HepG2 (cell line): ENCODE measurements at regions of chr1 and their contacts with region 1.

Region 1: DNA sequence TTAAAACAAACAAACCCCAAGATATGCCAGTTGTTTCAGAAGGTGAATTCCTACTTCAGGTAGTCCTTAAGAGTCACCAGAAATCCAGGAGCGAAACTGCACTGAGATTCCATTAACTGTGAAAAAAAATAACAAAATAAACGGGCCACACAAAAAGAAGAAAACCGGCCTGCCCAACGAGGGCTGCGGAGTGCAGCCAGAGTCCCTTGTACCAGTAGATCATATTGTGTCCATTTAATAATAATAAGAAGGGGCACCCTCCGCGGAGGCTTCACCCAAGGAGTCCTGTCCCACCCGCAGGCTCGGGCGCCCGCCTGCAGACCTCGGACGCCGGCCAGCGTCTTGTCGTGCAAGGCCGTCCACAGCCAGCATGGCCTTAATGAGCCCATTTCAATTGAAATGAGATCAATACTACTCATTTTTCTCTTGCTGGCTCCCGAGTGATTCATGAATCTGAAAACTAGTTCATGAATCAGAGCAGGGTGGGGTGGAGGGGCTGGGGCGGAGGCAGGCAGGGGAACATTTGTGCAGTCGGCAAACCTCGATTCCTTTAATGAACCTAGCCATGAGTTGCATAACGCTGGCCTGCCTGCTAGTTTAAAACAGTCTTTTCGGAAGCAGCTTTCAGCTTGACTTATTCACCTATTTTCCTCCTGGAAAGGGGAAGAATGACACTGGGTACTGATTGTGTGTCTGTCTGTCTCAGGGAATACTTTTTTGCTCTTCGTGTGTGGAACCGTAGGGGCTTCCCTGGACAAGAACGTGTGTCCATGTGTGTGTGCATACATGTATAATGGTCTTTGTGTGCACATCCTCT is 113.1 kb upstream of the IRF2BP2 start:
- DNase-seq: peak; percentile 82
- ATAC-seq: no peak
- H3K4me3 ChIP-seq: peak overlapping the region in 1 of 3 experiments; percentile 61; a peak in 2 of 6 replicates
- H3K27ac ChIP-seq: peak overlapping the region; percentile 99
- H3K4me1 ChIP-seq: peaks cover 97% of the 10 kb centered on the region
- H3K27me3 ChIP-seq: no peaks in the 10 kb centered on the region
- CTCF ChIP-seq: no peak
- EP300 ChIP-seq: peak in 1 of 2 experiments; percentile 4; a peak in 1 of 4 replicates
- POLR2A ChIP-seq: peak in 1 of 2 experiments; percentile 48; a peak in 1 of 4 replicates
- RAD21 ChIP-seq: no peak

Region 2: DNA sequence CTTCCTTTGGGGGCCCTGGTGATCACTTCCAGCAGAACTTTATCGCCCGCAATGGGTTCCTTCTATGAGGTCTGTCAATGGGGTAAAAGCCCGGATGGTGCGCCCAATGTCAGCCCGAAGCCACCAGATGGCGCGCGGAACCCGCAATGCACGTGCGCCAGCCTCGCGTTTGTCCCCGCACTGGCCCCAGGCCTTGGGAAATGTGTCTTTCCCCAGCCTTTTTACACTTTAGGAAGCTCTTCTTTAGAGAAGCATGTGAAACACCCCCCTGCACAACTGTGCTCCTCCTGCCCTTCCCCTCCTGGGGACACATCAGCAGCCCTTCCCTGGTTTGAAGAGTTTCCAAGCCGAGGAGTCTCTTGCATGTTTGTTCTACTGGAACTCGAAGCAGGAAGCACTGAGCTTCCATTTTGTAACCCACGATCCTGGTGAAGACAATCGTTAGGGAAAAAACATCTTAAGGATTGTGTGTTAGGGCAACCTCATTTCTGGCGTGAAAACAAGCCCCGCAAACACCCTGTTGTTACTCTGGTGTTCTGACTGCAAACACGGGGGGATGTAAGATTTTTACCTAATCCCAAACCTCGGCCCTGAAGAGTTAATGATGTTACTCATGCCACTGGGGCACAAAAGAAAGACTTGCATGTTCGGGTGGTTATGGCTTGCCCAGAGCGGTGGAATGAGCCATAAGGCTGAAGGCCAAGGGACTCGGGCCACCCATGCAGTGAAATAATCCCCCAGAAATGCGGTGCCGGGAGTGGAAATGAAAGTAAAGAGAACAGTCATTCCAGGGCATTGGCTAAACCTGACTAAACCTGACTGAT is 223.8 kb before region 1 on chr1:
- CTCF ChIA-PET with region 1: no interaction called
- POLR2A ChIA-PET with region 1: interaction called, 8 read pairs
- in situ Hi-C with region 1: loop called (anchors 10 kb)
- intact Hi-C with region 1: loop called (anchors 10 kb)
- DNase-seq: peak; percentile 65
- ATAC-seq: peak; percentile 99
- H3K4me3 ChIP-seq: 0 out of 6 replicates have a peak overlapping the region, but pooled peaks of 1 of the 3 experiments have one; percentile 8
- H3K27ac ChIP-seq: peak overlapping the region; percentile 50
- H3K4me1 ChIP-seq: peaks cover 61% of the 10 kb centered on the region
- H3K27me3 ChIP-seq: no peaks in the 10 kb centered on the region
- CTCF ChIP-seq: peak; percentile 97
- EP300 ChIP-seq: no peak
- POLR2A ChIP-seq: no peak
- RAD21 ChIP-seq: peak; percentile 99

Region 3: GRCh38 chr1:234631721-234632125 is 91.4 kb before region 1 on chr1:
- CTCF ChIA-PET with region 1: no interaction called
- POLR2A ChIA-PET with region 1: interaction called, 16 read pairs
- in situ Hi-C with region 1: no loop called
- intact Hi-C with region 1: no loop called
- DNase-seq: peak; percentile 90
- ATAC-seq: peak; percentile 66
- H3K4me3 ChIP-seq: no peak overlapping the region
- H3K27ac ChIP-seq: peak overlapping the region; percentile 60
- H3K4me1 ChIP-seq: peaks cover 80% of the 10 kb centered on the region
- H3K27me3 ChIP-seq: no peaks in the 10 kb centered on the region
- CTCF ChIP-seq: no peak
- EP300 ChIP-seq: peak in 1 of 2 experiments; percentile 82; a peak in 2 of 4 replicates
- POLR2A ChIP-seq: no peak
- RAD21 ChIP-seq: no peak

Region 4: GRCh38 chr1:234737967-234738314 is 14.8 kb after region 1 on chr1:
- CTCF ChIA-PET with region 1: no interaction called
- POLR2A ChIA-PET with region 1: interaction called, 35 read pairs
- in situ Hi-C with region 1: no loop called
- intact Hi-C with region 1: no loop called
- DNase-seq: no peak
- ATAC-seq: no peak
- H3K4me3 ChIP-seq: no peak overlapping the region
- H3K27ac ChIP-seq: no peak overlapping the region
- H3K4me1 ChIP-seq: peaks cover 37% of the 10 kb centered on the region
- H3K27me3 ChIP-seq: no peaks in the 10 kb centered on the region
- CTCF ChIP-seq: no peak
- EP300 ChIP-seq: no peak
- POLR2A ChIP-seq: no peak
- RAD21 ChIP-seq: no peak

Region 5: DNA sequence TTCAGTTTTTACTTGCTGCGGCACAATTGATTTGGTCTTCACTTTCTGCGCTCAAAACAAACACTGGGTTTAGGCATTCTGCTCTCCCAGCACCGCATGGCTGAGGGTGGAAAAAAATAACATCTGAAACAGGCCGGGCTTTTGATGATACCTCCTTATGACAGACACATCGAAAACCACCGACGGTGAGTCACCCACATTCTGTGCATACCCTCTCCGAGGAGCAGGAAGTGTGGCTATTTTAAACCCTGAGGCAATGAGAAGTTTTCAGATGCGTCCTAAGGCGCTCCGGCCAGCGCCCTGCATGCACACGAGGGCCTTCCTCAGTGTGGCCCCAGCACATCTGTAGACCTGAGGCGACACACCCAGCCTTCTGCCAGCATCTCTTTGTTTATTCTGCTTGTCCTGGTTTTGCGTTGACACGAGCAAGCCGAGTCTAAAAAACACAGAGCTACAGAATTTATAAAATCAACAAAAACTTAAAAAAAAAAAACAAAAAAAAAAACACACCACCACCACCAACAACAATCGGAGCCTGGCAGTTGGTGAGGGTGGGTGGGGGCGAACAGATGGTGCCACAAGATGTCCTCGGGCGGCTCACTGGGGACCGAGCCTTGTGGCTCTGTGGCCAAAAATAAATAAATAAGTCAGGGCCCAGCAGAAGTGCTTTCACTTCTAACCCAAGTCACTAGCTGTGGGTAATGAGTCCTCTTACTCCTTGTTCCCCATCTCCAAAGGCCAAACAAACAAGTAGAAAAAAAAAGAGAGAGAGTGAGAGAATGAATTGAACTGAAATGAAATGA is 49.4 kb after region 1 on chr1:
- CTCF ChIA-PET with region 1: no interaction called
- POLR2A ChIA-PET with region 1: interaction called, 97 read pairs
- in situ Hi-C with region 1: no loop called
- intact Hi-C with region 1: loop called (anchors 2 kb)
- DNase-seq: peak; percentile 93
- ATAC-seq: peak; percentile 66
- H3K4me3 ChIP-seq: no peak overlapping the region
- H3K27ac ChIP-seq: peak overlapping the region; percentile 73
- H3K4me1 ChIP-seq: peaks cover 61% of the 10 kb centered on the region
- H3K27me3 ChIP-seq: peaks cover 0 to 7% of the 10 kb centered on the region in 2 experiments; a peak in 2 of 5 replicates
- CTCF ChIP-seq: no peak
- EP300 ChIP-seq: peak; percentile 25 to 87; a peak in 2 of 4 replicates
- POLR2A ChIP-seq: 0 out of 4 replicates have a peak, but pooled peaks of 1 of the 2 experiments have one; percentile 28
- RAD21 ChIP-seq: 0 out of 2 replicates have a peak, but pooled peaks have one; percentile 21

Region 6: DNA sequence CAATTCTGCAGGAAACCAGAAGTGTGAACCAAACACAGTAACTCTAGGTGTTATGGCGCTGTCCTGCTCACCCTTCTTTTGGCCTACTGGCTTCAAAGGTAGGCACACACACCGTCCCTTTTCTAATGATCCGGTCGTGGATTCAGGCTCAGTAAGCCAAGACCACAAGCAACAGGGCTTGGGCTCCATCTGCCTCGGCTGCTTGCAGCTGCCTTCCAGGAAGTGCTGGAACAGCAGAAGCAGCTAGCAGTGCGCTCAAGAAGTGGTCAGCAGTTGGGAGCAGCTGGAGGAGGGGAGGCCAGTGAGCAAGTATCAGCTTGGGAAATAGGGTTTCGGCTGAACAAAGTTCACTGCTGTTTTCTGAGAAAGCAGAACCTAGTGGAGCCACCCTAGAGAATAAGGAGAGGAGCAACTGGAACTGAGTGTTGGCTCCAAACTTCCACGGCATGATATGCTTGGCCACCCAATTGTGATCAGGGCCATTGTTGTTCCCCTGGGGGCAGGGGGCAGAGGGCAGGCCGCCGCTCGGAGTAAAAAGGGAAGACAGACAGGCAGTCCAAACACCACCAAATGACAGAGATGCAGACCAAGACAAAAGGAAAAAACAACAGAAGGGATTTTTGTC is 232.1 kb after region 1 on chr1:
- CTCF ChIA-PET with region 1: no interaction called
- POLR2A ChIA-PET with region 1: interaction called, 86 read pairs
- in situ Hi-C with region 1: no loop called
- intact Hi-C with region 1: no loop called
- DNase-seq: no peak
- ATAC-seq: peak; percentile 2; the same call in 1 of the 3 replicates
- H3K4me3 ChIP-seq: peak overlapping the region in 1 of 3 experiments; percentile 5; a peak in 1 of 6 replicates
- H3K27ac ChIP-seq: peak overlapping the region; percentile 100
- H3K4me1 ChIP-seq: peaks cover 85% of the 10 kb centered on the region
- H3K27me3 ChIP-seq: no peaks in the 10 kb centered on the region
- CTCF ChIP-seq: peak; percentile 5; the same call in 1 of the 2 replicates
- EP300 ChIP-seq: no peak; a peak in 1 of 4 replicates
- POLR2A ChIP-seq: 0 out of 4 replicates have a peak, but pooled peaks of 1 of the 2 experiments have one; percentile 36
- RAD21 ChIP-seq: 0 out of 2 replicates have a peak, but pooled peaks have one; percentile 10

Region 7: DNA sequence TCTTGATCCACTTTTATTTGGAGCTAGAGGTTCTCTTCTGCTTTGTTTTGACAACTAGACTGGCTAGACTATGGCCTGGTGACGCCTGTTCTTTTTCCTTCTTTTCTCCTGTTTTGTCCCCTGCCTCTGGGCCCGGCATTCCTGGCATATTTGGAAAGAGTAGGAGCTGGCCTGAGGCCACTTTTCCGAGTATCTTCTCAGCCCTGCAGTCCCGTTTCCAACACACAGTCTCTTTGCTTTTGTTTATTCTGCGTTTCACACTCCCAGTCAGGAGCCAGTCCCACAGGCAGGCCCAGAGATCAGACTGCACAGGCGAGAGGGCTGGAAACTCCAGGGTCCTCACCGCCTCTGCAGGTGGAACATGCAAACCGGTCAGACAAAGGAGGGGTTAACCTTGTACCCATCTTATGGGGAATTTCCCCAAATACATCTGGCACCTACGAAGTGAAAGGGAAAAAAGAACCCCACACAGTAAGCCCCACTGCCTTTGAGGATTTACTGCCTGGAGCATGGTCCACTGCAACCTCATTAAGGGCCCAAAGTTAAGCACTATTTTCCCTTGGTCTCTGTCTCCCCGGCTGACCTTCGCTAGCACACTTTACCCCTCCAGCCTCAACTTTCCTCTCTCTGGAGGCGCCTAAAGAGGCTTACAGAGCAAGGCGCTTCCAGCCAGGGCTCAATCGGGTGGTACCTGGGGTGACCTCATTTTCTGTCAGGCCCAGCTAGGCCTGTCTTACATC is 264.5 kb after region 1 on chr1:
- CTCF ChIA-PET with region 1: no interaction called
- POLR2A ChIA-PET with region 1: interaction called, 11 read pairs
- in situ Hi-C with region 1: no loop called
- intact Hi-C with region 1: no loop called
- DNase-seq: peak; percentile 95
- ATAC-seq: peak; percentile 97
- H3K4me3 ChIP-seq: peak overlapping the region; percentile 13 to 53 (median 24); a peak in 4 of 6 replicates
- H3K27ac ChIP-seq: peak overlapping the region; percentile 95
- H3K4me1 ChIP-seq: peaks cover 93% of the 10 kb centered on the region
- H3K27me3 ChIP-seq: no peaks in the 10 kb centered on the region
- CTCF ChIP-seq: 0 out of 2 replicates have a peak, but pooled peaks have one; percentile 9
- EP300 ChIP-seq: peak; percentile 62 to 68; a peak in 2 of 4 replicates
- POLR2A ChIP-seq: peak; percentile 55 to 80; a peak in 3 of 4 replicates
- RAD21 ChIP-seq: 0 out of 2 replicates have a peak, but pooled peaks have one; percentile 19